Activated CD4-positive, alpha-beta T cell treated with anti-CD3 and anti-CD28 coated beads for 36 hours (primary cell): ENCODE measurements at regions of chr5 and their contacts with region 1.

Region 1: DNA sequence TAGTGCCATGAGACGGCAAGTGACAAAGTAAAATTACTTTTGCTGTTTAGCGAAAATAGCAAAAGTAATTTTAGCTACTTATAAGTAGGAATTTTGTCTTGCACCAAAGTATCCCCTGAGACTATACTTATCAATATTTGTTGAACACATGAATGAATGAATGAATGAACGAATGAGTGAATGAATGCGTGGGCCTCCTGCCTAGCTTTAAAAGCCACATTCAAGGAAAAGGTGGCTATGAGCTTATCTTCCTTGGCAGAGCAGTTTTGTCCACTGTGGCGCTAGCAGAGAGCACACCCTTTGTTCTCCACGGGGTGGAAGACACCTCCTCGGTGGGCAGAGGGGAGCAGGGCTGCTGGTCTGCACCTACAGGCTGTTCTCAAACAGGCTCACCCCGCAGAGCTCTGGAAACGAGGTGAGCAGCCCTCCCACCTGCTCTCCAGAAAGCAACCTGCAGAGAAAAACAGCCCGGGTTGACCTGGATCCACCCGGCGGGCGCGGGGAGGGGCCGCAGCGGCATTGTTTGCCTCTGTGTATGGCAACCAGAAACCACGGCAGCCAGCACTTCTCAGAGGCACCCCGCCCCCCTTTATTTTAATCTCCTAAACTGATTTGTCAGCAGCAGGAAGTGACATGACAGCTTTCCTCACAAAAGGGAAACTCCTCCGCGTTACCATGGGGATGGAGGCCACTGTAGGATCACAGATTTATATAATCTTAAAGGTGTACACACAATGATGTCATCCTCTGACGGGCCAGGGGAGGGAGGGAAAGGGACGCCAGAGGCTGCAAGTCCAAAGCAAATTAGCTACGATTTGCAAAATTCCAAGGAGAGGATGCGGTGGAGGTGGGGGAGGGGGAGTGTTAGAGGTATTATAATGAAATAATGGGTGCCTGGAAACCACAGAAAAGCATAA is 5.9 kb downstream of the DUSP1 start:
- DNase-seq: peak; percentile 96
- ATAC-seq: peak; percentile 93
- H3K4me3 Mint-ChIP-seq: peak overlapping the region; percentile 72
- H3K27ac Mint-ChIP-seq: peak overlapping the region; percentile 91
- H3K4me1 Mint-ChIP-seq: peaks cover 45% of the 10 kb centered on the region
- H3K27me3 Mint-ChIP-seq: no peaks in the 10 kb centered on the region

Region 2: GRCh38 chr5:172659909-172660628 is 105.0 kb before region 1 on chr5:
- CTCF ChIA-PET with region 1: no interaction called
- POLR2A ChIA-PET with region 1: no interaction called
- intact Hi-C with region 1: no loop called
- DNase-seq: no peak
- ATAC-seq: no peak
- H3K4me3 Mint-ChIP-seq: no peak overlapping the region
- H3K27ac Mint-ChIP-seq: no peak overlapping the region
- H3K4me1 Mint-ChIP-seq: no peaks in the 10 kb centered on the region
- H3K27me3 Mint-ChIP-seq: no peaks in the 10 kb centered on the region

Region 3: DNA sequence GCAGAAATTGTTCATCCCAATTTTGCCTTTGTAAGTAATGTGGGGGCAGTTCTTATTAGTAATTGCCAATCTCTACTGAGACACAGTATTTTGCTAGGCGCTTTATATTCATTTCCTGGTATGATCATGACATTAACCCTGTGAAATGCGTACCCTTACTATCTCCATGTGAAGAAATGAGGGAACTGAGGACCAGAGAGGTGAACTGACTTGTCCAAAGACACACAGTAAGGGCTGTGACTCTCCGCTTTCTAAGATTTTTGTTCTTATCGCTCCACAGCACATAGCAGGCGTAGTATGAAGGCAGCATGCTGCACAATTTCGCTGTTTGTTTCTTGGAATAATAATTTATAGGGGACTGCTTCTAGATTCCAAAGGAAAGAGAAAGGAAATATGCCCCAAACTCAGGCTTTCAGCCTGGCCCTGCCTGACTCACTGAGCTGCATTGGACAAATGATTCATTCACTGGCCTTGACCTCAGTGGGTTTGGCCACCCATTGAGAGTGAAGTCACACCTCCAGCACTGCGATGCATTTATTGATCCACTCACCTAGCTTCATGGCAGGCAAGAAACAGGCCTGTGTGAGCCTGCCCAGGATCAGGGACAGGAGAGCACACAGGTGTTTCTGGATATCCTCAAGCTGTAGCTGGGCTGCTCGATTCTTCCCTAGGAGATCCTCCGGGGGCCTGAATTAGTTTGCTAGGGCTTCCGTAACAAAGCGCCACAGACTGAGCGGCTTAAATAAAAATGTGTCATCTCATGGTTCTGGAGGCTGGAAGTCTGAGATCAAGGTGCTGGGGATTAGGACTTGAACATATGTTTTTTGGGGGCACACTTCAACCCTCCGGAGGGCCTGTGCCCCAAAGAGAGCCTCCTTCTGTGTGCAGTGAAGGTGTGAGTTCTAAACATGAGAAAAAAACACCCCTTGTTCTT is 13.0 kb after region 1 on chr5:
- CTCF ChIA-PET with region 1: interaction called, 4 read pairs
- POLR2A ChIA-PET with region 1: interaction called, 7 read pairs
- intact Hi-C with region 1: loop called (anchors 1 kb)
- DNase-seq: peak; percentile 36
- ATAC-seq: peak; percentile 45
- H3K4me3 Mint-ChIP-seq: peak overlapping the region; percentile 40
- H3K27ac Mint-ChIP-seq: peak overlapping the region; percentile 92
- H3K4me1 Mint-ChIP-seq: peaks cover 59% of the 10 kb centered on the region
- H3K27me3 Mint-ChIP-seq: no peaks in the 10 kb centered on the region

Region 4: GRCh38 chr5:172806897-172807672 is 42.0 kb after region 1 on chr5:
- CTCF ChIA-PET with region 1: interaction called, 3 read pairs
- POLR2A ChIA-PET with region 1: interaction called, 19 read pairs
- intact Hi-C with region 1: loop called (anchors 1 kb)
- DNase-seq: peak; percentile 98
- ATAC-seq: peak; percentile 97
- H3K4me3 Mint-ChIP-seq: peak overlapping the region; percentile 54
- H3K27ac Mint-ChIP-seq: peak overlapping the region; percentile 84
- H3K4me1 Mint-ChIP-seq: peaks cover 17% of the 10 kb centered on the region
- H3K27me3 Mint-ChIP-seq: no peaks in the 10 kb centered on the region

Region 5: GRCh38 chr5:172833686-172834414 is 68.7 kb after region 1 on chr5 and contains the start of gene ERGIC1:
- CTCF ChIA-PET with region 1: interaction called, 3 read pairs
- POLR2A ChIA-PET with region 1: interaction called, 3 read pairs
- intact Hi-C with region 1: loop called in 1 of 2 experiments (anchors 1 kb)
- DNase-seq: peak; percentile 79
- ATAC-seq: peak; percentile 77
- H3K4me3 Mint-ChIP-seq: peak within 1 kb of the TSS; percentile 79
- H3K27ac Mint-ChIP-seq: peak within 1 kb of the TSS; percentile 84
- H3K4me1 Mint-ChIP-seq: peaks cover 42% of the 10 kb centered on the region
- H3K27me3 Mint-ChIP-seq: no peaks in the 10 kb centered on the region
- total RNA-seq, gene ERGIC1: 40.3 to 50.0 TPM

Region 6: GRCh38 chr5:172932313-172933017 is 167.4 kb after region 1 on chr5:
- CTCF ChIA-PET with region 1: interaction called, 4 read pairs
- POLR2A ChIA-PET with region 1: no interaction called
- intact Hi-C with region 1: loop called in 1 of 2 experiments (anchors 1 kb)
- DNase-seq: peak; percentile 88
- ATAC-seq: peak; percentile 97
- H3K4me3 Mint-ChIP-seq: no peak overlapping the region
- H3K27ac Mint-ChIP-seq: no peak overlapping the region
- H3K4me1 Mint-ChIP-seq: peaks cover 4% of the 10 kb centered on the region
- H3K27me3 Mint-ChIP-seq: no peaks in the 10 kb centered on the region

Region 7: GRCh38 chr5:173050791-173051190 is 285.7 kb after region 1 on chr5:
- CTCF ChIA-PET with region 1: no interaction called
- POLR2A ChIA-PET with region 1: no interaction called
- intact Hi-C with region 1: no loop called
- DNase-seq: no peak
- ATAC-seq: no peak
- H3K4me3 Mint-ChIP-seq: no peak overlapping the region
- H3K27ac Mint-ChIP-seq: no peak overlapping the region
- H3K4me1 Mint-ChIP-seq: peaks cover 20% of the 10 kb centered on the region
- H3K27me3 Mint-ChIP-seq: no peaks in the 10 kb centered on the region